Activated CD4-positive, alpha-beta T cell treated with anti-CD3 and anti-CD28 coated beads for 36 hours (primary cell): ENCODE measurements at regions of chr20 and their contacts with region 1.

Region 1: GRCh38 chr20:23970049-23970448 is 18.5 kb downstream of the GGTLC1 start:
- DNase-seq: no peak
- ATAC-seq: no peak
- H3K4me3 Mint-ChIP-seq: no peak overlapping the region
- H3K27ac Mint-ChIP-seq: no peak overlapping the region
- H3K4me1 Mint-ChIP-seq: no peaks in the 10 kb centered on the region
- H3K27me3 Mint-ChIP-seq: peaks cover 4% of the 10 kb centered on the region

Region 2: GRCh38 chr20:23668477-23668951 is 301.5 kb before region 1 on chr20:
- CTCF ChIA-PET with region 1: no interaction called
- POLR2A ChIA-PET with region 1: no interaction called
- intact Hi-C with region 1: loop called in 1 of 2 experiments (anchors 10 kb)
- DNase-seq: peak; percentile 66
- ATAC-seq: peak; percentile 68
- H3K4me3 Mint-ChIP-seq: no peak overlapping the region
- H3K27ac Mint-ChIP-seq: no peak overlapping the region
- H3K4me1 Mint-ChIP-seq: no peaks in the 10 kb centered on the region
- H3K27me3 Mint-ChIP-seq: no peaks in the 10 kb centered on the region